ENCODE measurements at regions of chr17 and their contacts with region 1.

Region 1: DNA sequence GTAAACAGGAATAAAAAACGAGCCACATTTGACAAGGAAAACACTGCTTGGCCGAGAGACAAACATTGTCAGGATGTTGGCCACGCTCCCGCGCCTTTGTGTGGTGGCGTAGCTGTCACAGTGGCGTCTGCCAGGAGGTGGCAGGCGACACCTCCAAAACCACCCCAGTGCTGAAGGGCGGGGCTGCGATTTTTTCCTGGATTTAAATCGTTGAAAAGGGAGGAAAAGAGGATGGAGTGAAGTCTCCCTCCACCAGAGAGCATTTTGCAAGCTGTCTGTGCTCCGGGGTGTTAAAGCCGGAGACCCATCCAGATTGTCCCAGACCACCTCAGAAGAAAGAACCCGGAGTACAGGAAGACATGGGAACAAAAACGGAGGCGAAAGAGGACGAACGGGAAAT is 12.7 kb downstream of the MRM3 start:
- DNase-seq: peak; percentile 90
- ATAC-seq: peak; percentile 90

Region 2: GRCh38 chr17:979538-980405 is 184.9 kb after region 1 on chr17 and contains the start of gene NXN:
- intact Hi-C with region 1: loop called (anchors 5 kb)
- DNase-seq: peak; percentile 94
- ATAC-seq: peak; percentile 87
- total RNA-seq, gene NXN: 44.3 TPM

Region 3: GRCh38 chr17:1055751-1056645 is 261.1 kb after region 1 on chr17:
- intact Hi-C with region 1: loop called (anchors 10 kb)
- DNase-seq: peak; percentile 85
- ATAC-seq: peak; percentile 86